Mammary epithelial cell (primary cell): ENCODE measurements at regions of chr17 and their contacts with region 1.

Region 1: DNA sequence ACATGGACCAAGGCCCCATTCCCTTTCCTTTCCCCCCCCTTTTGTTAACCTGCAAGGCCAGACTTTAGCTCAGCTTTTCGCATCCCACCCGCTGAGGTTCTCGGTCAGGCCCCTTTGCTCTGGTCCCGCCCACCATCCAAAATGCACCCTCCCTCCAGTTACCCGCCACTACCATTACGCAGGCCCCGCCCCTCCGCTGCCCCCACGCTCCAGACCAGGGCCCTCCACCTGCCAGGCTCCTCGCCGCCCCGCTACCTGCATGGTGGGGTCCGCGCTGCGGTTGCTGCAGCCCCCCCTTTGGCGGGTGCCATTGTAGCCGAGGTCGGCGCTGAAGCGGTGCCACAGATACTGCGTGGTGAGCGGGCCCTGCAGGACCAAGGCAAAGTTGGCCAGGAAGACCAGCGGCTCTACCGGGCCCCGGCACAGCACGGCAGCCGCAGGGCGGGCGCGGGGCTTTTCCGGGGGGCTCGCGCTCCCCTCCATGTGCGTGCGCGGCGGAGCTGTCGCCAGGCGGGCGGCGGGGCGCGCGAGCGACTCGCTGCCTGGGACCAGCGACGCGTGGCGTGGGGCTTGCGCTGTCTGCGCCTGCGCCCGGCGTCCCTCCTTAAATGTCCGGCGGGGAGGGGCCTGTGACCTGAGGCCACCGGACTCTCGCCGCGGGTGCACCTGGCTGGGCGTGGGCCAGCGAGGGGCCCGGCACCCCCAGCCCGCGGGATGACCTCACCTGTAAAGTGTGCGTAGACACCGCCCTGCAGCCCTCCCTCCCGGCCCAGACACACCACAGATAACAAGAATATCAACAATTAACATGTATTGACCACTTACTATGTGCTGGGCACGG is at the start of gene SLC46A1:
- DNase-seq: peak; percentile 23
- H3K4me3 ChIP-seq: peak within 1 kb of the TSS; percentile 49 to 73 (median 68)
- H3K27ac ChIP-seq: peak within 1 kb of the TSS; percentile 62
- H3K4me1 ChIP-seq: peaks cover 52% of the 10 kb centered on the region
- H3K27me3 ChIP-seq: no peaks in the 10 kb centered on the region
- CTCF ChIP-seq: no peak
- total RNA-seq, gene SLC46A1: 15.3 to 47.8 TPM

Region 2: DNA sequence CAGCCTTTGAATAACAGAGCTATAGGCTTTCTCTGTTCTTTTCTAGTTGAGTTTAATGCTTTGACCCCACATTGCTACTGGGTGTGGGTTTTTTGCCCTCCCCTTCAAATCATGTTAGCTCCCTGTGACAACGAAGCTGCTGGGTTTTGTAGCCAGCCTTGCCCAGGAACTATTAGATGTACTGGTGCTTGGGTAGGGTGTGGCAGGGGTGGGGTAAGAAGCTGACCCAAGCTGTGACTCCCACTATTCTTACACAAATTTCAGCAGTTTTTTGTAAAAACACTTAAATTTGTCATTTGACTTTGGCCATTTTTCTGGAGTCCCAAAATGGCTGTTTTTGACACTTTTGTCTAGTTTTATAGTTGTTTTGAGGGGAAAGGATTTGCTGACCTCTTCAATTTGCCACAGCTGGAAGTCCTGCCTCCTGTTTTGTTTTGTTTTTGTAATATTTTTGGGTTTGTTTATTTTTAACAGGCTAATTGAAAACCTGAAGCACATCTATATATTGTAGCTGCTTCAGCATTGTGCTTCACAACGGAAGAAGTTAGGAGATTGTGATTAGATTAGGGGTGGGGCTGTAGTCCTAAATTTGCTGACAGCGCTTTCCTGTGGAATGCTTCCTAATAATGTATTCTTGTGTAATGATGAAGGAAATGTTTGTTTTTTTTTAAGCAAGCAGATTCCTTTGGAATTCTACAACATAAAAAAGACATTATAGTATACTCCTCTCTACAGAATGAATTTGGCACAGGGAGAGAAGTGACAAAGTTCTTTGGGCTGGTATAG is 293.4 kb before region 1 on chr17:
- CTCF ChIA-PET with region 1: no interaction called
- dilution Hi-C with region 1: no loop called
- in situ Hi-C with region 1: no loop called
- intact Hi-C with region 1: no loop called
- DNase-seq: no peak
- H3K4me3 ChIP-seq: no peak overlapping the region
- H3K27ac ChIP-seq: no peak overlapping the region
- H3K4me1 ChIP-seq: peaks cover 9% of the 10 kb centered on the region
- H3K27me3 ChIP-seq: no peaks in the 10 kb centered on the region
- CTCF ChIP-seq: no peak

Region 3: DNA sequence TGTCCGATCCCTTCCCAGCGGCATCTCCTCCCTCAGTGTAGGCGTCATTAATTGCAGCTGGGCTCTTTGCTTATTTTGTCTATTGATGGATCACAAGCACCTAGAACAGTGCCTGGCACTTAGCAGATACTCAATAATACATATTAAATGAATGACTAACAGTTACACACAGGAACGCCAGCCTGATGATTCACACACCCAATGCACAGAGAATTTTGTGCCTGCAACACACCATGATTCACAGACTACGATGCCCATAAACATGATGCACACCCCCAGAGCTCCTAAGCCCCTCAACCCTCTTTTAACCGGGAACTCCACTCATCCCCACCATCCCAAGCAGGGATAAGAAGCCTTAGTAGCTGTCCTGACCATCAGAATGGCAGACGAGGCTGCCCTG is 153.4 kb before region 1 on chr17:
- CTCF ChIA-PET with region 1: no interaction called
- dilution Hi-C with region 1: no loop called
- in situ Hi-C with region 1: no loop called
- intact Hi-C with region 1: loop called (anchors 5 kb)
- DNase-seq: peak; percentile 83
- H3K4me3 ChIP-seq: no peak overlapping the region
- H3K27ac ChIP-seq: no peak overlapping the region
- H3K4me1 ChIP-seq: peaks cover 15% of the 10 kb centered on the region
- H3K27me3 ChIP-seq: no peaks in the 10 kb centered on the region
- CTCF ChIP-seq: no peak

Region 4: DNA sequence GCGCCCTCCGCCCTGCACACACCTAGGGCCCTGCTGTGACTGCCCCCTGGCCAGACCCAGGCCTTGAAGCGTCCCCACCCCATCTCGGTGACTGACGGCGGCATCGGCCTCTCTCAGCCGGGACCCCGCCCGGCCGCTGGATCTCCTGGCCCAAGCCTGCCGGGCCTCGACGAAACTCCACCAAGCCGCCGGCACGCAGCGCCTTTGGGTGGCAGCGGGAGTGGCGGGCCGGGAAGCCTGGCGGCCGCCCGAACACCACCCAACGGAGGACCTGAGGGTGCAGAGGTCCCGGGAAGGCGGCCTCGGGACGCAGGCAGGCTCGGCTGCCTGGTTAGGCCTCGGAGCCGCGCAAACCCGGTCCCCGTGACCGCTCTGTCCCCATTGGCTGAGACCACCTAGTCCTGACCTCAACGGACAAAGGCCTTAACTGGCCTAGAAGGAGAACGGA is 98.9 kb before region 1 on chr17:
- CTCF ChIA-PET with region 1: no interaction called
- dilution Hi-C with region 1: no loop called
- in situ Hi-C with region 1: no loop called
- intact Hi-C with region 1: no loop called
- DNase-seq: no peak
- H3K4me3 ChIP-seq: no peak overlapping the region
- H3K27ac ChIP-seq: no peak overlapping the region
- H3K4me1 ChIP-seq: no peaks in the 10 kb centered on the region
- H3K27me3 ChIP-seq: no peaks in the 10 kb centered on the region
- CTCF ChIP-seq: no peak

Region 5: DNA sequence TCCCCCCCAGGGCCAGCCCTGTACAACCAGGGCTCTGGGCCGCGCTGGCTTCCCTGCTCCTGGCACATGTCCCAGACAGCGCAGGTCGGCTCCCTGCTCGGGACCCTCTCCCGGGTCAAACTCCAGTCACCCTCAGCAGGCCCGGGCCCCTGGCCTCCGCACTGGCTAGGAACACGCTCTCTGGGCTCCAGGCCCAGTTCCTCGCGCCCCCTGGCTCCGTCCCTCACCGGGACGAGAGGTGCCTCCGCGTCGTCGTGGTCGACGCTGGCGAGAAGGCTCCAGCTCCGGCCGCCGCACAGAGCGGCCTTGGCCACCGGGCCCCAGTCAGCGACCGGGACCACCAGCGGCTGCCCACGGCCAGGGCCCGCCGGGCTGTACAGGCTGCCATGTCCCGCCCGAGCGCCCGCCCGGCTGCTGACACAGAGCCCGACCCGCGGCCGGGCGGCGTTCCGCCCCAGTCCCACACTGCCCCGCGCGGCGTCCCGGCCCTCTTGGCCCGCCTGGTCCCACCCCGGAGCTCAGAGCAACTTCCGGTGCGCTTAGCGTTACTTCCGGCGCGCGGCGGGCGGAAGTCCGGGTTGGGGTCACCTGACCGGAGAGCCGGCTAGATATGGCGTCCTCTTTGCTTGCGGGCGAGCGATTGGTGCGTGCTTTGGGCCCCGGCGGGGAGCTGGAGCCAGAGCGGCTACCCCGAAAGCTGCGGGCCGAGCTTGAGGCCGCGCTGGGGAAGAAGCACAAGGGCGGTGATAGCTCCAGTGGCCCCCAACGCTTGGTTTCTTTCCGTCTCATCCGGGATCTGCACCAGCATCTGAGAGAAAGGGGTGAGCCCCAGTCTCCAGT is 48.6 kb before region 1 on chr17 and contains the start of gene POLDIP2:
- CTCF ChIA-PET with region 1: no interaction called
- dilution Hi-C with region 1: no loop called
- in situ Hi-C with region 1: no loop called
- intact Hi-C with region 1: loop called (anchors 2 kb)
- DNase-seq: peak; percentile 94
- H3K4me3 ChIP-seq: peak within 1 kb of the TSS; percentile 88 to 99 (median 99)
- H3K27ac ChIP-seq: peak within 1 kb of the TSS; percentile 85
- H3K4me1 ChIP-seq: peaks cover 16% of the 10 kb centered on the region
- H3K27me3 ChIP-seq: no peaks in the 10 kb centered on the region
- CTCF ChIP-seq: no peak
- total RNA-seq, gene POLDIP2: 76.3 to 80.5 TPM

Region 6: DNA sequence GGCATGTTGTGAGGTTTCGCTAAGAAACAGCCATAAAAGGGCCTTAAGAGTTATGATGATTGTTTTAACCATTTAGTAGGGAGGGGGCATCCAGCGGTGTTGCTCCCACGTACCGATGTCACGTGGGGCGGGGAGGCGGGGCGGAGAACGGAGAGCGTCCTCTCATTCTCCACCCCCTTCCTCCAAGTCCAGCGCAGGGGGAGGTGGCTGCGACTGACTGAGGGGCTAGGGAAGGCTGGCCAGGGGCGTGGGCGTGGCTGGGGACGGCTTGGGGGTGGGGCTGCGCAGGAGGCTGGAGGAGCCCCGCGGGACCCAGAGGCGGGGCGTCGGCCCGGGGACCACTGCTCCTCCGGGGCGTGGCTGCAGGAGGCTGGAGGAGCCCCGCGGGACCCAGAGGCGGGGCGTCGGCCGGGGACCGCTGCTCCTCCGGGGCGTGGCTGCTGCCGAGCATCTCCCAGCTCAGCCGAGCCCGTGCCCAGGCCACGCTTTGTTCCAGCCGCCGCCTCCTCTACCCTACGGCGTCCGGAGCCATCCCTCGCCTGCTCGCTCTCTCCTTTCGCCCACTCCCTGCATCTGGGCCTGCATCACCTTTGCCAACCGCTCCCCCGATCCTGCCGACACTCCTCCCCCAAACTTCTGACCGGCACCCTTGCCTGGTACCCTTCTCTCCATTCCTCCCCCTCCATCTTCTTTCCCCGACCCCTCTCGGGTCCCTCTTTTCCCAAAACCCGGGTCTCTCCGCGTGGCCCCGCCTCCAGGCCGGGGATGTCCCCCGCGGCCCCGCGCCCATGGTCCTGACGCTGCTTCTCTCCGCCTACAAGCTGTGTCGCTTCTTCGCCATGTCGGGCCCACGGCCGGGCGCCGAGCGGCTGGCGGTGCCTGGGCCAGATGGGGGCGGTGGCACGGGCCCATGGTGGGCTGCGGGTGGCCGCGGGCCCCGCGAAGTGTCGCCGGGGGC is 34.3 kb before region 1 on chr17 and contains the start of gene SARM1:
- CTCF ChIA-PET with region 1: no interaction called
- dilution Hi-C with region 1: no loop called
- in situ Hi-C with region 1: no loop called
- intact Hi-C with region 1: loop called (anchors 2 kb)
- DNase-seq: peak; percentile 27
- H3K4me3 ChIP-seq: peak within 1 kb of the TSS; percentile 23 to 50 (median 36)
- H3K27ac ChIP-seq: no peak within 1 kb of the TSS
- H3K4me1 ChIP-seq: peaks cover 11% of the 10 kb centered on the region
- H3K27me3 ChIP-seq: no peaks in the 10 kb centered on the region
- CTCF ChIP-seq: no peak
- total RNA-seq, gene SARM1: 4.8 to 8.7 TPM

Region 7: GRCh38 chr17:28384281-28385036 is 21.4 kb before region 1 on chr17:
- CTCF ChIA-PET with region 1: no interaction called
- dilution Hi-C with region 1: no loop called
- in situ Hi-C with region 1: no loop called
- intact Hi-C with region 1: loop called (anchors 1 kb)
- DNase-seq: no peak
- H3K4me3 ChIP-seq: no peak overlapping the region
- H3K27ac ChIP-seq: no peak overlapping the region
- H3K4me1 ChIP-seq: peaks cover 13% of the 10 kb centered on the region
- H3K27me3 ChIP-seq: no peaks in the 10 kb centered on the region
- CTCF ChIP-seq: no peak

Region 8: DNA sequence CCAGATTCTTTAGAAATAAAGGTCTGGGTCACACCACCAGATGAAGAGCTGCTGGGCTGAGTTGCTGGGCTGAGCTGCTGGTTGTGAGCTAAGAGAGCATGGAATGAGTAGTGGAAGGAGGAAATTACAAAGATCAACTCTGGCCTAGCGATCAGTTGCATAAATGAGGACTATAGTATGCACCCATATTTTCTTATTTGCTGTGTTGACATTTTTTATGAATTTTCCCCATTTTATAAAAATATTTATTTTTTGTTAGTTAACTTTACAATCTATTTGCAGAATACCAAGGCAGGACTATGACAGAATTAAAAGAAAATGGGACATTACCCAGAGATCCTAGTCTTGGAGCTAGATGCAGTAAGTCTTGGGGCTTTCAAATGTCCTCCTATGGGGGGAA is 44.0 kb after region 1 on chr17:
- CTCF ChIA-PET with region 1: no interaction called
- dilution Hi-C with region 1: loop called (anchors 5 kb)
- in situ Hi-C with region 1: no loop called
- intact Hi-C with region 1: no loop called
- DNase-seq: no peak
- H3K4me3 ChIP-seq: no peak overlapping the region
- H3K27ac ChIP-seq: no peak overlapping the region
- H3K4me1 ChIP-seq: peaks cover 11% of the 10 kb centered on the region
- H3K27me3 ChIP-seq: no peaks in the 10 kb centered on the region
- CTCF ChIP-seq: no peak

Region 9: DNA sequence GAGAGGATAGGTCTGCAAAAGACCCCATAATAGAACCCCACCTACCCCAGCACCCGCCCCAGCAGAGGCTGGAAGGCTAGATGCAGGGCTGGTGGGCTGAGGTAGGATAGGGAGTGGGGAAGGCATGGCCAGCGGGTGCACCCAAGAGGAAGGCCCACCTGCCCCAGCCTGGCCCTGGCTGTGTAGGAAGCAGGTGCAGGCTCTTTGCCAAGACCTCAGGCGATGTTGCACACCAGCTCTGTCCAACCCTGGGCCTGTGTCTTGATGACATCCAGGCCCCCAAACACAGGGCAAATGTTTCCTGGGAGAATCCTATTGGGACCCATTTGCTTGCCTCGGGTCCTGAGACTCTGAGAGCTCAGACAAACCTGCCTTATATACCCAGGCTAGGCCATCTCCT is 134.4 kb after region 1 on chr17:
- CTCF ChIA-PET with region 1: no interaction called
- dilution Hi-C with region 1: no loop called
- in situ Hi-C with region 1: no loop called
- intact Hi-C with region 1: loop called (anchors 2 kb)
- DNase-seq: no peak
- H3K4me3 ChIP-seq: no peak overlapping the region
- H3K27ac ChIP-seq: no peak overlapping the region
- H3K4me1 ChIP-seq: no peaks in the 10 kb centered on the region
- H3K27me3 ChIP-seq: no peaks in the 10 kb centered on the region
- CTCF ChIP-seq: no peak